PC-9 (cell line): ENCODE measurements at regions of chr11 and their contacts with region 1.

Region 1: GRCh38 chr11:65418711-65419459 is 3.7 kb upstream of the NEAT1 start:
- DNase-seq: peak; percentile 98 to 99
- H3K4me3 ChIP-seq: peak overlapping the region; percentile 59
- H3K27ac ChIP-seq: peak overlapping the region; percentile 100
- H3K4me1 ChIP-seq: peaks cover 57% of the 10 kb centered on the region
- H3K27me3 ChIP-seq: no peaks in the 10 kb centered on the region
- CTCF ChIP-seq: no peak

Region 2: DNA sequence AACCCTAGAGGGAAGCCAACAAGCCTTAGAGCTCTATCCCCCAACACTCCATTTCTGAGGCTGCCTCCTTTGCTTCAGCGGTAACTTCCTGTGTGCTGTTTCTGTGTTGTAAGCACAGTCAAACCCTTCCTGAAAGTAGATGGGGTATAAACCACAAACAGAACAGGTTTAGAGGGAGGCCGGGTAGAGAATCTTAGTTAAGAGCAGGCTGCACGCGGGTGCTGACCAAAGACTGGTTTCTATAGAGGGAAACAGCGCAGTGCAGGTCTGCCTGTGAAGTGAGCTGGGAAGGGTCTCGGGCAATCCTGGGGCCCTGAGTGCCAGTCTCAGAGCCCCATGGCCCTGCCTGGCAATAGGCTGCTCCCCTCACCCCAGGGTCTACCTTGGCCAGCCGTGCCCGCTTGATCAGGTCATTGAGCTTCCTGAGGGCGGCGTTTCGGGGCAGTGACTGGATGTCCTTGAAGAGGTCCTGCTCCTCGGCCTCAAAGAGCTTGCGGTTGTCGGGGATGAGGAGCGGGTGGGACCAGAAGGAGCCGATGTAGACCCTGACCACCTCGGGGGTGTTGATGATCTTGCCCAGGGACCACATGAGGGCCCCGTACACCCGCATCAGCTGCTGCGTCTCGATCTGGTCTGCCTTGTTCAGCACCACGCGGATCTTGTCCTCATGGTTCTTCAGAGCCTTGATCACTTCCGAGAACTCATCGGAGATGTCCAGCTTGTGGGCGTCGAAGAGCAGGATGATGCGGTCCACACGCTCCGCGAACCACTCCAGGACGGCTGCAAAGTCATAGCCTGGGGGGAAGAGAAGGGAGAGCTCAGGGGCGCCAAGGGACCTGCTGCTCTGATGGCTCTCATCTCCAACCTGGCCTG is 559.1 kb before region 1 on chr11:
- CTCF ChIA-PET with region 1: no interaction called
- POLR2A ChIA-PET with region 1: no interaction called
- intact Hi-C with region 1: no loop called
- DNase-seq: no peak
- H3K4me3 ChIP-seq: no peak overlapping the region
- H3K27ac ChIP-seq: 0 out of 2 replicates have a peak overlapping the region, but pooled peaks have one; percentile 4
- H3K4me1 ChIP-seq: peaks cover 48% of the 10 kb centered on the region
- H3K27me3 ChIP-seq: no peaks in the 10 kb centered on the region
- CTCF ChIP-seq: no peak

Region 3: GRCh38 chr11:64971421-64972233 is 447.3 kb before region 1 on chr11 and contains the start of gene MAJIN:
- CTCF ChIA-PET with region 1: no interaction called
- POLR2A ChIA-PET with region 1: interaction called, 16 read pairs
- intact Hi-C with region 1: no loop called
- DNase-seq: peak; percentile 66 to 93
- H3K4me3 ChIP-seq: peak within 1 kb of the TSS; percentile 52; the same call in 1 of the 2 replicates
- H3K27ac ChIP-seq: peak within 1 kb of the TSS; percentile 95
- H3K4me1 ChIP-seq: peaks cover 26% of the 10 kb centered on the region
- H3K27me3 ChIP-seq: 0 out of 2 replicates have a peak, but pooled peaks cover under 1% of the 10 kb centered on the region
- CTCF ChIP-seq: no peak
- total RNA-seq, gene MAJIN: 4.5 and 7.1 TPM in 2 replicates

Region 4: GRCh38 chr11:65117216-65118096 is 301.4 kb before region 1 on chr11 and contains the start of gene ZNHIT2:
- CTCF ChIA-PET with region 1: no interaction called
- POLR2A ChIA-PET with region 1: no interaction called
- intact Hi-C with region 1: no loop called
- DNase-seq: peak; percentile 96 to 100
- H3K4me3 ChIP-seq: peak within 1 kb of the TSS; percentile 100
- H3K27ac ChIP-seq: peak within 1 kb of the TSS; percentile 86
- H3K4me1 ChIP-seq: peaks cover 38% of the 10 kb centered on the region
- H3K27me3 ChIP-seq: no peaks in the 10 kb centered on the region
- CTCF ChIP-seq: peak; percentile 98
- total RNA-seq, gene ZNHIT2: 13.7 and 22.3 TPM in 2 replicates

Region 5: DNA sequence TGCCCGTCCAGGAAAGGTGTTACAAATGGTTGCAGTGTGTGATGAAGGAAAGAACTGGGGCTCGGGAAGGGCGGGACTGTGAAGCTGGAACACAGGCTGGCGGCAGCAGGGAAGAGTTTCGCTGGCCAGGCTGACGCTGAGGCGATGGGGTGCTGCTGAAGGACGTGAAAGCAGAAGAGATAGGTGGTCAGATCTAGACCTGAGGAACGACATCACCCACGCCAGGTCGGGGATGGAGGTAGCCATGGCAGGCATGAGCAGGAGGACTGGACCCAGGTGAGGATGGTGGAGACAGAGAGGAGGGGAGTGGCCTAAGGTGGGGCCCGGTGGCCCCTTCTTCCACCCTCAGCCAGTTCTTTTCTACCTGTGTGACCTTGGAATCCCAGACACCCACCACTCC is 95.1 kb before region 1 on chr11:
- CTCF ChIA-PET with region 1: no interaction called
- POLR2A ChIA-PET with region 1: no interaction called
- intact Hi-C with region 1: no loop called
- DNase-seq: no peak
- H3K4me3 ChIP-seq: no peak overlapping the region
- H3K27ac ChIP-seq: no peak overlapping the region
- H3K4me1 ChIP-seq: no peaks in the 10 kb centered on the region
- H3K27me3 ChIP-seq: no peaks in the 10 kb centered on the region
- CTCF ChIP-seq: no peak

Region 6: GRCh38 chr11:65382033-65382807 is 36.7 kb before region 1 on chr11 and contains the start of gene SLC25A45:
- CTCF ChIA-PET with region 1: interaction called, 4 read pairs
- POLR2A ChIA-PET with region 1: interaction called, 14 read pairs
- intact Hi-C with region 1: loop called (anchors 1 kb)
- DNase-seq: peak; percentile 97 to 98
- H3K4me3 ChIP-seq: peak within 1 kb of the TSS; percentile 48; the same call in 1 of the 2 replicates
- H3K27ac ChIP-seq: peak within 1 kb of the TSS; percentile 93
- H3K4me1 ChIP-seq: peaks cover 64% of the 10 kb centered on the region
- H3K27me3 ChIP-seq: no peaks in the 10 kb centered on the region
- CTCF ChIP-seq: peak; percentile 79
- total RNA-seq, gene SLC25A45: 9.5 and 9.8 TPM in 2 replicates

Region 7: GRCh38 chr11:65448418-65449105 is 29.7 kb after region 1 on chr11:
- CTCF ChIA-PET with region 1: interaction called, 3 read pairs
- POLR2A ChIA-PET with region 1: interaction called, 13 read pairs
- intact Hi-C with region 1: loop called (anchors 1 kb)
- DNase-seq: peak in 1 of 2 experiments; percentile 34
- H3K4me3 ChIP-seq: no peak overlapping the region
- H3K27ac ChIP-seq: no peak overlapping the region
- H3K4me1 ChIP-seq: peaks cover 11% of the 10 kb centered on the region
- H3K27me3 ChIP-seq: no peaks in the 10 kb centered on the region
- CTCF ChIP-seq: no peak

Region 8: DNA sequence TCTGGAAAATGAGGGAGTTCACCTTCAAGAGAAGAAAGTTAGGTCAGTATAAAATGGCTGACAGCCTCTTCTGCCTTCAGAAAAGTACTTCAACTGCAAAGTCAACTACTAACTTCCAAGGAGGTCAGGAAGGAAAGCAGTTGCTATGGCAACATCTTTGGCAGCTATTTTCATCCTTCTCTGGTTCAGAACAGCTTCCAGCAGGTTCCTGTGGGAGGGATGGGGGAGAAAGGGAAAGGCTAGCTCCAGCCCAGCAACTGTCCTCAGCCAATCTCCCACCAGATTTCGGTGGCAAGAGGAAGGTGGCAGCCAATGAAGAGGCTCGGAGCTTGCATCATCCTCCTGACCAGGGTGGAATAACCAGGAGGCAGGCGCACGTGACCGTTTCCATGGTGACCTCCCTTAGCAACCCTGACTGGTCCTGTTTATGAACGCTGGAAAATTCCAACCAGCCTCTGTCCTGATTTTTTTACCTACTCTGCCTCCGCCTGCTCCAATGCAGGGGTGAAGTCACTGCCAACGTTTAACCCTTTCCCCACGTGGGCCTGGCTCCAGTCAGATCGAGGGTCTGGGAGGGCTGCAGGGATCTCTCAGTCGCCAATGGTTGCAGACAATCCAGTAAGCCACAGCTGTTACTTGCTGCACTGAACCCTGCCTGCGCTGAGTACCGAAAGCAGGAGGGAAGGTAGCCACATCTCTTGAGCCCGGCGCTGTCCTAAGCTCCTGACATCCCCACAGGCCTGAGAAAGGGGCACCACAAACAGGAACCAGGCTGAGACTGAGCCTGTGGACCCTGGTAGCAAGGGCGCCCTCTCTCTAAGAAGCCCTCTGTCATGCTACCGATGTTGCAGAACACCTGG is 68.8 kb after region 1 on chr11:
- CTCF ChIA-PET with region 1: interaction called, 3 read pairs
- POLR2A ChIA-PET with region 1: interaction called, 10 read pairs
- intact Hi-C with region 1: no loop called
- DNase-seq: peak; percentile 98 to 99
- H3K4me3 ChIP-seq: no peak overlapping the region
- H3K27ac ChIP-seq: peak overlapping the region; percentile 88
- H3K4me1 ChIP-seq: peaks cover 79% of the 10 kb centered on the region
- H3K27me3 ChIP-seq: no peaks in the 10 kb centered on the region
- CTCF ChIP-seq: no peak

Region 9: DNA sequence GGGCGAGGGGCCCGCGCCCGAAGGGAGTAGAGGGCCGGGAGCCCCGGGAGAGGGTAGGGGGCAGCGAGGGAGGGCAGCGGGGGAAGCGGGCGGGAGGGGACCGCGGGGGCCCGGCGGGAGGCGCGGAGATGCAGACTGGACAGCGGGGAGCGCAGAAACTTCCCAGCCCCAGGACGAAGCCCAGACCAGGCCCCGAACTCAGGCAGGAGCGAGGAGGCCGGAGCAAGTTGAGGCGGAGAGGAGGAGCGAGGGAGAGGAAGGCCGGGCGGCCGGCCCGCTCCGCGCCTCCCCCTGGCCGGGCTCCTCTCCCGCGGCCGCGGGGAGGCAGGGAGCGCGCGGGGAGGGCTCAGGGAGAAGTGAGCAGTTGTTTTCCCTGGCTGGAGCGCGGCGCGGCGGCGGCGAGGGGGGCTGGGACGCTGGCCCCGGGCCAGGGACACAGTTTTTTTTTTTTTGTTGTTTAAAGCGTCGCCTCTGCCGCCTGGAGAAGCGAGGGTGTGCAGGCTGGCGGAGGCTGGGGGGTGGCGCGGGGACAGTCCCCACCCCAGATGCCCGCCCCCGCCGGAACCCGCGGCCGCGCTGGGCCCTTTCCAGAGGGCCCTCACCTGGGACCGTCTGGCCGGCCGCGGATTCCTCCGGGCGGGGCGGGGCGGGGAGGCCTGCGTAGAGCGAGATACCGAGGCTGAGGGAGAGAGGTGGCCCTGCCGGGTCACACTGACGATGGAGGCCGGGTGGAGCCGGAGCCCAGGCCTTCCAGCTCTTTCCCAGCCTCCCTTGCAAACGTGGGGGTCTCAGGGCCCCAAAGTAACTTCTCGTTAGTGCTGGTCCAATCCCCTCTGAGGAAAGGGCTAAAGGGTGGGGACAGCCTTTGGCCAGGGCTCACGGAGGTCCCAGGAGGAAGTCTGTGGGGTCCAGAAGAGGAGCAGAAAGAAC is 139.4 kb after region 1 on chr11 and contains the start of gene LTBP3:
- CTCF ChIA-PET with region 1: no interaction called
- POLR2A ChIA-PET with region 1: interaction called, 15 read pairs
- intact Hi-C with region 1: loop called (anchors 5 kb)
- DNase-seq: peak; percentile 71 to 92
- H3K4me3 ChIP-seq: peak within 1 kb of the TSS; percentile 77
- H3K27ac ChIP-seq: peak within 1 kb of the TSS; percentile 69
- H3K4me1 ChIP-seq: peaks cover 71% of the 10 kb centered on the region
- H3K27me3 ChIP-seq: no peaks in the 10 kb centered on the region
- CTCF ChIP-seq: no peak
- total RNA-seq, gene LTBP3: 455 and 553 TPM in 2 replicates